ENCODE measurements at regions of chr22 and their contacts with region 1.

Region 1: GRCh38 chr22:39003165-39003638 is 10.9 kb upstream of the APOBEC3C start:
- DNase-seq: peak; percentile 86
- ATAC-seq: peak; percentile 100
- H3K4me3 ChIP-seq: no peak overlapping the region
- H3K27ac ChIP-seq: peak overlapping the region; percentile 4; the same call in 1 of the 2 replicates
- H3K4me1 ChIP-seq: peaks cover 3% of the 10 kb centered on the region
- H3K27me3 ChIP-seq: peaks cover 8% of the 10 kb centered on the region
- CTCF ChIP-seq: peak; percentile 83
- POLR2A ChIP-seq: no peak
- RAD21 ChIP-seq: peak; percentile 72

Region 2: GRCh38 chr22:38872172-38872830 is 130.9 kb before region 1 on chr22 and contains the start of gene CBX6:
- CTCF ChIA-PET with region 1: interaction called, 28 read pairs
- POLR2A ChIA-PET with region 1: no interaction called
- dilution Hi-C with region 1: no loop called
- in situ Hi-C with region 1: loop called (anchors 5 kb)
- intact Hi-C with region 1: loop called (anchors 1 kb)
- DNase-seq: peak; percentile 90
- ATAC-seq: peak; percentile 82
- H3K4me3 ChIP-seq: peak within 1 kb of the TSS; percentile 95
- H3K27ac ChIP-seq: peak within 1 kb of the TSS; percentile 95
- H3K4me1 ChIP-seq: no peaks in the 10 kb centered on the region
- H3K27me3 ChIP-seq: no peaks in the 10 kb centered on the region
- CTCF ChIP-seq: no peak
- POLR2A ChIP-seq: no peak; the same call in 1 of the 2 replicates
- RAD21 ChIP-seq: no peak
- total RNA-seq, gene CBX6: 15.2 and 17.5 TPM in 2 replicates

Region 3: DNA sequence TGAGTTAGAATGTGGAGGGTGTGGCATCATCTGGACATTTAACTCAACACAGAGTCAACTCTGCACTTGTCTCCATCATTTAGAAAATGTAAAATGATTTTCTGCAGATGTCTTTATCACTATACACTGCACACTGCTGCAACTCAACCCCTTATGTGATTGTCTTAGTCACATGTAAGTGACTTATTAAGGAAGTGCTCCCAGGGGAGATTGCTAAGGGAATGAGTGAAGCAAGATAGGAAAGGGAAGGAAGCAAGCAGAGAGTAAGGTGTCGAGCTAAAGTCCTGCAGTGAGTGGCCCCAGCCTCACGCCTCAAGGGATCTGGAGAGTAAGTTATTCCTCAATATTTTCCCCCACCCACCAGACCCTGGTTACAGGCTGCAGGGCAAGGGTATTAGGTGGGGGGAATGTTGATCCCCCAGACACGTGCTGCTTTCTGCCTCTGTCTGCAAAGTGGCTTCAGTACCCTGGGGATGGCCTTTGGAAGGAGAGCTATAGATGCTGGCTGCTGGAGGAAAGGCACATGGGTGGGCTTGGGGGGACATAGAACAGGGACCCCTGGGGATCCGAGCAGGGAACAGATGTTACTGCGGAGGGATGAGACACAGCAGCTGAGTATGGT is 124.0 kb before region 1 on chr22:
- CTCF ChIA-PET with region 1: no interaction called
- POLR2A ChIA-PET with region 1: no interaction called
- dilution Hi-C with region 1: no loop called
- in situ Hi-C with region 1: loop called (anchors 5 kb)
- intact Hi-C with region 1: no loop called
- DNase-seq: no peak
- ATAC-seq: no peak
- H3K4me3 ChIP-seq: no peak overlapping the region
- H3K27ac ChIP-seq: no peak overlapping the region
- H3K4me1 ChIP-seq: peaks cover 14% of the 10 kb centered on the region
- H3K27me3 ChIP-seq: no peaks in the 10 kb centered on the region; the same call in 1 of the 2 replicates
- CTCF ChIP-seq: no peak
- POLR2A ChIP-seq: no peak
- RAD21 ChIP-seq: no peak

Region 4: GRCh38 chr22:38927033-38927781 is 76.0 kb before region 1 on chr22:
- CTCF ChIA-PET with region 1: interaction called, 6 read pairs
- POLR2A ChIA-PET with region 1: no interaction called
- dilution Hi-C with region 1: no loop called
- in situ Hi-C with region 1: no loop called
- intact Hi-C with region 1: loop called (anchors 1 kb)
- DNase-seq: peak; percentile 37
- ATAC-seq: peak; percentile 56
- H3K4me3 ChIP-seq: no peak overlapping the region
- H3K27ac ChIP-seq: no peak overlapping the region
- H3K4me1 ChIP-seq: peaks cover 6% of the 10 kb centered on the region
- H3K27me3 ChIP-seq: no peaks in the 10 kb centered on the region; the same call in 1 of the 2 replicates
- CTCF ChIP-seq: peak; percentile 63
- POLR2A ChIP-seq: no peak
- RAD21 ChIP-seq: peak; percentile 37; the same call in 1 of the 2 replicates

Region 5: GRCh38 chr22:39117585-39118191 is 114.5 kb after region 1 on chr22:
- CTCF ChIA-PET with region 1: interaction called, 3 read pairs
- POLR2A ChIA-PET with region 1: no interaction called
- dilution Hi-C with region 1: no loop called
- in situ Hi-C with region 1: no loop called
- intact Hi-C with region 1: loop called (anchors 1 kb)
- DNase-seq: peak; percentile 49
- ATAC-seq: no peak; the same call in 1 of the 2 replicates
- H3K4me3 ChIP-seq: no peak overlapping the region
- H3K27ac ChIP-seq: no peak overlapping the region
- H3K4me1 ChIP-seq: no peaks in the 10 kb centered on the region
- H3K27me3 ChIP-seq: peaks cover 38% of the 10 kb centered on the region
- CTCF ChIP-seq: peak; percentile 58
- POLR2A ChIP-seq: no peak
- RAD21 ChIP-seq: peak; percentile 49

Region 6: DNA sequence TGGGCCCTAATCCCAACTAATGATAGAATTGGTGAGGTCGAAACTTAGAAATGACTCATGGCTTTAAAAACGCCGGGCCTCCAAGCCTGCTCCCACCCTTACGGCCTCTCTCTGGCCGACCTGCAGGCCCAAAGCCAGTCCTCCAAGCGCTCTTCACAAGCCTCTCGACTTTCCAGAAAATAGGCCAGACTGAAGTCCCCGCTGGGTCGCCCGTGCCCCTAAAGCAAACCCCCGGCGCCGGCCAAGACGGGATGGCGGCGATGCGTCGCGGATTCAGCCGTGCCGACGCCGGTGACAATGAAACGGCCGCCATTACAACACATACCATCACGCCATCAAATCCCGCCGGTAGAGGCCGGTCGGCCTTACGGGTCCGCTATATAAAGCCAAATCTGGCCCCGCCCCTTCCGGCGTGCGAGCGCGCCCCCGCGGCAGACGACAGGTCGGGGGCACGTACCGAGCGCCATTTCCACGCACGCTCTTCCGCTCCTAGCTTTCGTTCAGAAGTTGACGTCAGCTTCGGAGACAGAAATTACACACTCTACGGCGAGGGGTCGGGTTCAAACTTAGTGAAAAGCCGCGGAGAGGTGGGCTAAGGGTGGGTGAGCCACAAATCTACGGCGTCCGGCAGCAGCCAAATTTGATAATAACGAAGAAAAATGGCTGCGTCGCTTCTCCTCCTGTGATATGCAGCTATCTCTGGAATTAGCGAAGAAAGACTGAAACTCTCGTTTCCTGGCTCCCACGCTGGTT is 316.2 kb after region 1 on chr22 and contains the start of gene RPL3:
- CTCF ChIA-PET with region 1: interaction called, 11 read pairs
- POLR2A ChIA-PET with region 1: no interaction called
- dilution Hi-C with region 1: no loop called
- in situ Hi-C with region 1: loop called (anchors 10 kb)
- intact Hi-C with region 1: loop called (anchors 10 kb)
- DNase-seq: peak; percentile 99
- ATAC-seq: peak; percentile 81
- H3K4me3 ChIP-seq: peak within 1 kb of the TSS; percentile 76
- H3K27ac ChIP-seq: peak within 1 kb of the TSS; percentile 85
- H3K4me1 ChIP-seq: peaks cover 16% of the 10 kb centered on the region
- H3K27me3 ChIP-seq: no peaks in the 10 kb centered on the region
- CTCF ChIP-seq: no peak
- POLR2A ChIP-seq: peak; percentile 100
- RAD21 ChIP-seq: no peak
- total RNA-seq, gene RPL3: 2,871 and 3,750 TPM in 2 replicates